ENCODE measurements at regions of chr1 and their contacts with region 1.

Region 1: DNA sequence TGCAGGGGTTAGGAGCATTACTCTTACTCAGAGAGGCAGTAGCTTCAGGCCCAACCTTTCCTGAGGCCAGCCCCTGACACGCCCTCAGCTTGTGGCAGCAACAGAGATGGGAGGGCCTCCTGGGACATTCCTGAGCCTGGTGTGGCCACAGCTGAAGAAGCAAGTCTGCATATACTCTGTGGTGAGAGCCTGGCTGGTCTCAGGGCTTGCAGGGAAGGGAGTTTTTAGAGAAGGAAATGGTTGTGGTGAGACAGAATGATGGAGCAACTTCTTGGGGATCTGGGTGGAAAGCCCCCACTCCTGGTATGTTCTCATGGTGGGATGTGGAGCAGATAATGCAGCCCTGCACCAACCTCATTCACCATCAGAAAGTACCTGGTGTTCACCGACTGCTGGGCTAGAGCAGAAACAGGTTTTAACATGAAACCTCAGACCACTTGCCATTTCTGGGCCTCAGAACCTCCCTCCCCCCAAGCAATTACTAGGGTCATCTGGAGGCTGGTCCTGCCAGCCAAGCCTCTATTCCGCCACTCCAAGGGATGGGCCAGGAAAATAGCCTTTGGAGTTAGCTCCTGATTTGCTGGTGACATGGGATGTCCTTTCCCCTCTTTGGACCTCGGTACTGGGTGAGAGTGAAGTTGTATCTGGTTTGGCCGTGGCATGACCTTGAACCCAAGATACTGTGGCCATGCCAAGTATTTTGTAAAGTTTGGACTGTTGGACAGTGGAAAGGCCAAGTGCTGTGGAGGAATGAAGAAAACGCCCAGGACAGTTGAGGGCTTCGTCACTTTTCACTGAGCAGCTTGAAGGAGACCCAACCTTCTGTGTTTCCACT is 28.1 kb upstream of the RNF19B start:
- DNase-seq: peak; percentile 98
- ATAC-seq: peak; percentile 90
- H3K4me3 ChIP-seq: peak overlapping the region; percentile 48; the same call in 1 of the 2 replicates
- H3K27ac ChIP-seq: peak overlapping the region; percentile 99
- H3K4me1 ChIP-seq: peaks cover 58% of the 10 kb centered on the region
- H3K27me3 ChIP-seq: no peaks in the 10 kb centered on the region
- CTCF ChIP-seq: no peak
- EP300 ChIP-seq: peak; percentile 58 to 91
- POLR2A ChIP-seq: no peak
- RAD21 ChIP-seq: no peak

Region 2: DNA sequence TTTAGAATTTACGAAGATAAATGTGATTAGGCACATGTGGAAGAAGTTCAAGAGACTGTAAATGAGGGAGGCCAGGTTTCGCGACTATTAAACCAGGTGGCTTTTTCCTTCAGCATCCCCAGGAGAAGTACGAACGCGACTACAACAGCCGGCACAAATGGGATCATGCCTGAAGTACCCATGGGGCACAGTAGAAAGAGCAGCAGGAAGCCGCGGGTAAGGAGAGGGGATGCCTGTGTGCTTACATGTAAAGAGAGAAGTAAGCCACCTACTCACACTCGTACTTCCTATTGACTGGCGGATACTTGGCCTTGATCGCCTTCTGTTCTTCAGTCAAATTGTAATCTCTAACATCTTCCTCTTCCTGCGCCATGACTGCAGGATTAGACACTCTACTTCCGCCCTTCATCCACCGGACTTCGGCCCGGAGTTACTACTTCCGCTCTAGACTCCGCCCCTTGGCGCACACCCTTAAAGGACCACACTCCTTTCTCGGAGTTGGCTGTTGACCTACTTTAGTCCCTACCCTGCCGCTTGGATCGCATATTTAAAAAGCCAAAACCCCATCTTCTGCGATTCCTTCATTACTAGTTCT is 342.5 kb before region 1 on chr1 and contains the start of gene ZBTB8OS:
- CTCF ChIA-PET with region 1: no interaction called
- POLR2A ChIA-PET with region 1: no interaction called
- RAD21 ChIA-PET with region 1: no interaction called
- SMC1A ChIA-PET with region 1: no interaction called
- in situ Hi-C with region 1: no loop called
- intact Hi-C with region 1: no loop called
- DNase-seq: peak; percentile 88
- ATAC-seq: peak; percentile 81
- H3K4me3 ChIP-seq: peak within 1 kb of the TSS; percentile 89
- H3K27ac ChIP-seq: peak within 1 kb of the TSS; percentile 100
- H3K4me1 ChIP-seq: peaks cover 3% of the 10 kb centered on the region; the same call in 1 of the 2 replicates
- H3K27me3 ChIP-seq: no peaks in the 10 kb centered on the region
- CTCF ChIP-seq: no peak
- EP300 ChIP-seq: no peak
- POLR2A ChIP-seq: peak; percentile 89
- RAD21 ChIP-seq: no peak
- polyA plus RNA-seq, gene ZBTB8OS: 294 to 350 TPM

Region 3: DNA sequence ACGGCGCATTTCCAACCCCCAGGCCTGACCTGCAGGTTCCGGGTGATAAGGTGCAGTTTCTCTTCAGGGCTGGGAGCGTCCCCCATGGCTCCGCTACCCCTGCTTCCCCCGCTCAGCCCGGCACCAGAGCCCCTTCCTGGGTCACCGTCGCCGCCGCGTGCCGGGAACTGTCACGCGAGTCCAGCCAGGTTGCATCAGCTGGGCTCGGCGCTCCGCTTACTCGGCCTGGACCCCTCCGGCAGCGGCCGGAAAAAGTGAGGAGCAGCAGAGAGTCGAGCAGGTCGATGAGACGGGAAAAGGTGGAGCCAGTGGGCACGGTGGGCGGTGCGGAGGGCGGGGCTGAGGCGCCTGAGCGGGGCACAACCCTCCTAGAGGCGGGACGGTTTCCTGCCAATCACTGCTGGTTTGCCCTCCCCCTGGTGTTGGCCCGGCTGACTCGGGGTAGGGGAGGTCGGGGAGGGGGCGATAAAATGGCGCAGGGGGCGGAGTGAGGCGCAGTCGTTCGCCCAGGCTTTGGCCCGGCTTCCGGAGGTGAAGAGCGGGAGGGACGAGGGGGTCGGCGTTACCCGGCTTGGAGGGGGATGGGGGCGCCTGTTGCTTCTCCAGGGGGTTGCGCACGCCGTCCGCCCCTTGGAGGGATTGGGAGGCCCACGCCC is 175.4 kb before region 1 on chr1 and contains the starts of genes S100PBP and YARS1:
- CTCF ChIA-PET with region 1: no interaction called
- POLR2A ChIA-PET with region 1: no interaction called
- RAD21 ChIA-PET with region 1: no interaction called
- SMC1A ChIA-PET with region 1: interaction called, 3 read pairs
- in situ Hi-C with region 1: no loop called
- intact Hi-C with region 1: loop called (anchors 2 kb)
- DNase-seq: peak; percentile 93
- ATAC-seq: peak; percentile 88
- H3K4me3 ChIP-seq: peak within 1 kb of the TSS; percentile 90
- H3K27ac ChIP-seq: peak within 1 kb of the TSS; percentile 100
- H3K4me1 ChIP-seq: peaks cover 28% of the 10 kb centered on the region
- H3K27me3 ChIP-seq: no peaks in the 10 kb centered on the region
- CTCF ChIP-seq: no peak; a peak in 1 of 6 replicates
- EP300 ChIP-seq: peak; percentile 37 to 65; a peak in 2 of 4 replicates
- POLR2A ChIP-seq: peak; percentile 92
- RAD21 ChIP-seq: no peak
- polyA plus RNA-seq, gene S100PBP: 17.0 to 19.1 TPM
- polyA plus RNA-seq, gene YARS1: 39.9 to 66.4 TPM

Region 4: DNA sequence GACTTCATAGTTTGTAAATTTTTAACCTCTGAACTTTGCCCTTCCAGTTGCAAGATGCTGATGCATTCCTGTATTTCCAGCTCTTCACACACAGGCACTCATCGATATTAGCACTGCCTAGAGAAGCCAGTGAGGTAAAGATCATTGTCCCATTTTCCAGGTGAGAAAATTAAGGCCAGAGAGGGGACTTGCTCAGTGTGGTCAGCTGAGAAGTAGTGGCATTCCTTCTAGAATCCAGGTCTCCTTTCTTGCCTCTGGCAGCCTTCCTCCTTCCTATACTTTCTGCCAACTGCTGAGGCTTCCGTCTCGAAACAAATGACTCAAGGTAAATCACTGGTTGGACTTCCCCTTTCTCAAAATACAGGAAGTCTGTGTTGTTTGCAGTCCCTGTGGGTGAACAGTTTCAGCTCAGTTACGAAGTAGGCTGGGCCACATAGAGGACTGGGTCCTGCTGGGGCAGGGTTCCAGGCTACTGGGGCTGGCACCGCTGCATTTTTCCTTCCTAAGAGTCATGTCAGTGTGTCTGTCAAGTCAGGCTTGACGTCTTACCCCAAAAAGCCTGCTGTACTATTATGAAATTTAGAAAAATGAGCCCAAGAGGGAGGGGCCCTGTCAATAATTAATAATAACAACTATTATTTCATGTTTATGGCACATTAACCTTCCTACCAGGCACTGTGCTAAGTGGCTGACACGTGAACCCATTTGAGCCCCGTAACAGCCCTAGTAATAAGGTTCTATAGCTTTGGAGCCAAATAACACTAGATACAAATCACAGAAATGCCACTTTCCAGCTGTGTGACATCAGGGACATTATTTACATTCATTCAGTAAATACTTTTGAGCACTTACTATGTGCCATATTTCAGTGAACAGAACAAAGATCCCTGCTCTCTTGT is 11.5 kb before region 1 on chr1:
- CTCF ChIA-PET with region 1: interaction called, 29 read pairs
- POLR2A ChIA-PET with region 1: interaction called, 49 read pairs
- RAD21 ChIA-PET with region 1: interaction called, 63 read pairs
- SMC1A ChIA-PET with region 1: interaction called, 65 read pairs
- in situ Hi-C with region 1: no loop called
- intact Hi-C with region 1: loop called (anchors 1 kb)
- DNase-seq: peak; percentile 92
- ATAC-seq: peak; percentile 95
- H3K4me3 ChIP-seq: peak overlapping the region; percentile 54; the same call in 1 of the 2 replicates
- H3K27ac ChIP-seq: peak overlapping the region; percentile 98
- H3K4me1 ChIP-seq: peaks cover 52% of the 10 kb centered on the region
- H3K27me3 ChIP-seq: no peaks in the 10 kb centered on the region
- CTCF ChIP-seq: no peak
- EP300 ChIP-seq: peak; percentile 41 to 68; a peak in 2 of 4 replicates
- POLR2A ChIP-seq: peak; percentile 91
- RAD21 ChIP-seq: no peak

Region 5: GRCh38 chr1:33022650-33023200 is 30.0 kb after region 1 on chr1:
- CTCF ChIA-PET with region 1: interaction called, 10 read pairs
- POLR2A ChIA-PET with region 1: interaction called, 8 read pairs
- RAD21 ChIA-PET with region 1: interaction called, 16 read pairs
- SMC1A ChIA-PET with region 1: interaction called, 30 read pairs
- in situ Hi-C with region 1: no loop called
- intact Hi-C with region 1: loop called (anchors 5 kb)
- DNase-seq: no peak
- ATAC-seq: no peak
- H3K4me3 ChIP-seq: no peak overlapping the region
- H3K27ac ChIP-seq: no peak overlapping the region
- H3K4me1 ChIP-seq: peaks cover 18% of the 10 kb centered on the region
- H3K27me3 ChIP-seq: no peaks in the 10 kb centered on the region
- CTCF ChIP-seq: no peak
- EP300 ChIP-seq: no peak
- POLR2A ChIP-seq: no peak
- RAD21 ChIP-seq: no peak

Region 6: GRCh38 chr1:33036526-33037503 is 44.1 kb after region 1 on chr1 and contains the start of gene AK2:
- CTCF ChIA-PET with region 1: interaction called, 3 read pairs
- POLR2A ChIA-PET with region 1: interaction called, 8 read pairs
- RAD21 ChIA-PET with region 1: interaction called, 9 read pairs
- SMC1A ChIA-PET with region 1: interaction called, 20 read pairs
- in situ Hi-C with region 1: no loop called
- intact Hi-C with region 1: no loop called
- DNase-seq: peak; percentile 98
- ATAC-seq: peak; percentile 99
- H3K4me3 ChIP-seq: peak within 1 kb of the TSS; percentile 88
- H3K27ac ChIP-seq: peak within 1 kb of the TSS; percentile 87
- H3K4me1 ChIP-seq: peaks cover 8% of the 10 kb centered on the region
- H3K27me3 ChIP-seq: no peaks in the 10 kb centered on the region
- CTCF ChIP-seq: no peak
- EP300 ChIP-seq: no peak; a peak in 1 of 4 replicates
- POLR2A ChIP-seq: peak; percentile 92
- RAD21 ChIP-seq: no peak
- polyA plus RNA-seq, gene AK2: 52.3 to 80.3 TPM

Region 7: GRCh38 chr1:33443080-33443704 is 450.5 kb after region 1 on chr1:
- CTCF ChIA-PET with region 1: no interaction called
- POLR2A ChIA-PET with region 1: no interaction called
- RAD21 ChIA-PET with region 1: no interaction called
- SMC1A ChIA-PET with region 1: no interaction called
- in situ Hi-C with region 1: no loop called
- intact Hi-C with region 1: no loop called
- DNase-seq: no peak
- ATAC-seq: no peak
- H3K4me3 ChIP-seq: no peak overlapping the region
- H3K27ac ChIP-seq: no peak overlapping the region
- H3K4me1 ChIP-seq: no peaks in the 10 kb centered on the region; the same call in 1 of the 2 replicates
- H3K27me3 ChIP-seq: peaks cover 4 to 5% of the 10 kb centered on the region in 2 experiments; a peak in 3 of 4 replicates
- CTCF ChIP-seq: no peak
- EP300 ChIP-seq: no peak
- POLR2A ChIP-seq: no peak
- RAD21 ChIP-seq: no peak